ENCODE measurements at regions of chr3 and their contacts with region 1.

Region 1: DNA sequence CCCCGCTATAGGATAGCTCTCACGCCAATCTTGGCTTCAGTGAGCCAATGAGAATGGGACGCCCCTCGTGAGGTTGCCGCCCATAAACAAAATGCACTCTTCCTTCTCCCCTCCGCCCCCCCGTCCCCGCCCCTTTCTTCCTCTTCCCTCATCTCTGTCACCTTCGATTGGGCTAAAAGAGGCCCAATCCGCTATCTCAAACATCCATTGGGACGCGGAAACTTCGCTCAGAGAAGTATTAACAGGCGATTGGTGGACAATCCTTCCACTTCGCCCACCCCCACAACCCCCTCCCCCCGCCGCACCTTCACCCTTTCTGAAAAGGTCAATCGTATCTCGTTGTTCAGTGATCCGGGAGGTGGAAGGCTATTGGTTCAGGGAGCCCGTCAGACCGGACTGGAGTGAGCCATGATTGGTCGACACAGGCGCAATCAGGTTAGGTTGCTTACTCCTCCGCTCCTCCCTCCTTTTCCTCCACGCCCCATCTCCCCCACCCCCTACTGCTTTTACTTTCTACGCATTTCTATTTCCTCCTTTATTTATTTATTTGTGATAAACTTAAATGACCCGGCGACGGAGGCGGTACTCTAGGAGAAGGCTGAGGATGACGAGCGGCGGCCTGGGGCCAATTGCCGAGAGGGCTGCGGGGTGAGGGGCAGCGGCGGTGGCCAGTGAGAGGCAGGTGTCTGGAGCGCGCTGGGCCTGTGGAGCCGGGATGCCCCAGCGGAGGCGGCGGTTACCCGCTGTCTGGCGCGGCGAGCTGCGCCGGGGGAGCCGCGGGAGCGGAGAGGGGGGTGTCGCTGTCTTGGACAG is 447 bp upstream of the ZBTB20 start:
- DNase-seq: peak; percentile 91
- H3K4me3 ChIP-seq: peak overlapping the region; percentile 69 to 85
- H3K27ac ChIP-seq: peak overlapping the region; percentile 95 to 96
- H3K4me1 ChIP-seq: peaks cover 8 to 11% of the 10 kb centered on the region in 2 experiments; a peak in 2 of 4 replicates
- H3K27me3 ChIP-seq: no peaks in the 10 kb centered on the region
- CTCF ChIP-seq: no peak
- EP300 ChIP-seq: peak; percentile 5 to 14; a peak in 1 of 4 replicates
- RAD21 ChIP-seq: no peak

Region 2: DNA sequence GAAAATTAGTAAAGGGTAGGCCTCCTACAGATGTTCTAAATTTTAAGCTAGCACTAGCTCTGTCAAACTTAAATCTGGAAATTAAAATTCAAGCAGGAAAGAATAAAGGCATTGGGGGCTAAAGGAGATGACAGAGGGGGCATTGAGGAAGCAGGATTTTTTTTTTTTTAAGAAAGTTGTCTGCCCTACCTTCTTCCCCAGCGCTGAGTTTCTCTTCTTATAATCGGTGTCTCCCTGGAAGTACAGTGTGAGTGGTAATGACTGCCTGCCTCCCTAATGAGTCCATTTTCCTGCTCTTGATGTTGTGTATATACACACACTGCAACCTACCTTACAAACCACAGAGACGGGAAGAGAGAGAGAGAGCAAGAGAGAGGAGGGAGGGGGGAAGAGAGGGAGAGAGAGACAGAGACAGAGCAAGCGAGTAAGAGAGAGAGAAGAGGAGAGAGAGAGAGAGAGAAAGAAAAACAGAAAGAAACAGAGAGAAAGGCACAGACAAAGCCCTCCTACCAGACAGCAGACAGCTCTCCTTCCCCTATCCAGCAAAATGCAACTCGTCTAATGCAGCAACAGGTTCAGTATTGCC is 47.5 kb before region 1 on chr3:
- CTCF ChIA-PET with region 1: no interaction called
- POLR2A ChIA-PET with region 1: interaction called, 11 read pairs
- DNase-seq: peak; percentile 12
- H3K4me3 ChIP-seq: peak overlapping the region; percentile 43 to 51
- H3K27ac ChIP-seq: peak overlapping the region; percentile 51 to 83
- H3K4me1 ChIP-seq: peaks cover 14 to 16% of the 10 kb centered on the region in 2 experiments; a peak in 3 of 4 replicates
- H3K27me3 ChIP-seq: no peaks in the 10 kb centered on the region
- CTCF ChIP-seq: no peak
- EP300 ChIP-seq: peak in 1 of 2 experiments; percentile 23; a peak in 1 of 4 replicates
- RAD21 ChIP-seq: no peak

Measured in SK-N-SH (cell line).